Naive thymus-derived CD4-positive, alpha-beta T cell (primary cell): ENCODE measurements at regions of chr18 and their contacts with region 1.

Region 1: DNA sequence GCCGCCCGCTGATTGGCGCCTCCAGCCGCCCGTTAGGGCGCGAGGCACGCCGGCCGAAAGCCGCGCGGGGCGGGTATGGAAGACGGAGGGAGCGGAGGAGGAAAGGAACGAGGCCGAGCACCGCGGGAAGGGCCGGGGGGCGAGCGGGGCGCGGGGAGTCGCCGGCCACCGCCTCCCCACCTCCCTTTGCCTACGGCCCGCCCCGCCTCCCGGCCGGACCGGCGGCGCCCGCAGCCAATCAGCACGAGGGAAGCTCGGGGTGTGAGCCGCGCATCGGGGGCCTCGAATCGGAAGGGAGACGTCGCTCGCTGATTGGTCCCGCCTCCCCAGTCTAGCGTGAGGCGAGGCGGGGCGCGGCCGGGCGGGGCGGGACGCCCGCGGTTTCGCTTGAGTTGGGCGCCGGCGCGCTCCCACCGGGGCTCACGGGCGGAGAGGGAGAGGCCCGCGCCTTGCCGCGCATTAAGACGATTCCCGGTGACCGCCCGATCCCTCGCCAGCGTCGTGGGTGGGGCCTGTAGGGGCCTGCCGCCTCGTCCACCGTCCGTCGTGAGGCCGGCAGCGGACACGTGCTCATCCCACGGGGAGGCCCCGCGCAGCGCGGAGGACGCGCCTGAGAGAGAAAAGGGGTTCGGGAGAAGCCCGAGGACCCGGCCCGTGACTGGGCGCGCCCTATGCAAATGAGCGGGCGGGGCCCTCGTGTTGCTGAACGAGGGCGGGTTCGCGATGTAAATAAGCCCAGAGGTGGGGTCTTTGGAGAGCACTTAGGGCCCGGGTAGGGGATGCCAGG is 665 bp upstream of the SMAD2 start:
- DNase-seq: peak; percentile 91 to 96 (median 94)
- ATAC-seq: peak; percentile 88
- H3K4me3 ChIP-seq: peak overlapping the region; percentile 64
- H3K4me3 Mint-ChIP-seq: peak overlapping the region; percentile 78 to 92 (median 88)
- H3K27ac ChIP-seq: peak overlapping the region; percentile 91
- H3K27ac Mint-ChIP-seq: peak overlapping the region; percentile 89 to 98 (median 94)
- H3K4me1 ChIP-seq: peaks cover 19 to 36% of the 10 kb centered on the region in 2 donors
- H3K4me1 Mint-ChIP-seq: peaks cover 39 to 46% (median 42%) of the 10 kb centered on the region in 7 donors
- H3K27me3 ChIP-seq: no peaks in the 10 kb centered on the region
- H3K27me3 Mint-ChIP-seq: peaks cover 0 to 13% (median 0%) of the 10 kb centered on the region in 5 donors

Region 2: GRCh38 chr18:46917108-46917802 is 1013.9 kb before region 1 on chr18 and contains the starts of genes KATNAL2 and PIAS2:
- CTCF ChIA-PET with region 1: no interaction called
- POLR2A ChIA-PET with region 1: no interaction called
- intact Hi-C with region 1: loop called in 1 of 2 experiments (anchors 2 kb)
- DNase-seq: peak; percentile 65 to 83 (median 70)
- ATAC-seq: peak; percentile 91
- H3K4me3 ChIP-seq: peak within 1 kb of the TSS; percentile 59
- H3K4me3 Mint-ChIP-seq: peak within 1 kb of the TSS; percentile 90 to 97 (median 93)
- H3K27ac ChIP-seq: peak within 1 kb of the TSS; percentile 75
- H3K27ac Mint-ChIP-seq: peak within 1 kb of the TSS; percentile 82 to 94 (median 87)
- H3K4me1 ChIP-seq: peaks cover 12 to 26% of the 10 kb centered on the region in 2 donors
- H3K4me1 Mint-ChIP-seq: peaks cover 36 to 56% (median 52%) of the 10 kb centered on the region in 7 donors
- H3K27me3 ChIP-seq: no peaks in the 10 kb centered on the region
- H3K27me3 Mint-ChIP-seq: peaks cover 0 to 7% (median 0%) of the 10 kb centered on the region in 5 donors
- total RNA-seq, gene KATNAL2: 1.1 to 2.8 (median 1.7) TPM
- total RNA-seq, gene PIAS2: 29.8 to 40.6 (median 36.1) TPM

Region 3: GRCh38 chr18:47226660-47227059 is 704.5 kb before region 1 on chr18:
- CTCF ChIA-PET with region 1: no interaction called
- POLR2A ChIA-PET with region 1: no interaction called
- intact Hi-C with region 1: no loop called
- DNase-seq: no peak
- ATAC-seq: no peak
- H3K4me3 ChIP-seq: no peak overlapping the region
- H3K4me3 Mint-ChIP-seq: no peak overlapping the region
- H3K27ac ChIP-seq: no peak overlapping the region
- H3K27ac Mint-ChIP-seq: no peak overlapping the region
- H3K4me1 ChIP-seq: no peaks in the 10 kb centered on the region
- H3K4me1 Mint-ChIP-seq: no peaks in the 10 kb centered on the region
- H3K27me3 ChIP-seq: no peaks in the 10 kb centered on the region
- H3K27me3 Mint-ChIP-seq: peaks cover 36 to 48% (median 40%) of the 10 kb centered on the region in 5 donors

Region 4: DNA sequence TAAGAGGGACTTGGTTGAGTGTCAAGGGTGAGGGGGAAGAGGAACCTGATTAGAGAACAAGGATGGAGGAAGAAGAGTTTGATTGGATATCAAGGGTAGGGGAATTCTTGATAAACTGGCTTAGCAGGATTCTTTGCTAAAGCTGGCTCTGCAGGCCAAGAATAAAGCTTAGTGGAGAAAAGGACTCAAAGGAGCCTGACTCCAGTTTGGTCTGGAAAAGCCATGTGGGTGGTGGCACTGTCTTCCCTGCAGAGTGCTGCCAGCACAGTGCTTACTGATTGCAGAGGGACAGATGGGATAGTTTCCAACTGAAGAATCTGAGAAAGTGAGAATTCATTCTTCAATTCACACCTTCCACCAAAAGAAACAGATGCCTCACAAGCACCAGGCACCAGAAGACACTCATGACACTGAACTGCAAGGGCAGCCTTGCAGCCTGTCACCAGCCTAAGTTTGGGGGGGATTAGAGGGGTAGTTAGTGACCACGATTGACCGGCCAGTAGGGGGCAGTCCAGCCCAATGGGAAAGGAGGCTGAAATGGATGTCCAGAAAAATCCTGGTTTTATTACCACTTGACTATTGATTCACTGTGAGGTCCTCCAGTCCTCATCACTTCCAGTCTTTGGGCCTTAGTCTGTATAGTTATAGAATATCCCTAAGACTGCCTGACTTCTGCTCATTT is 335.2 kb before region 1 on chr18:
- CTCF ChIA-PET with region 1: no interaction called
- POLR2A ChIA-PET with region 1: no interaction called
- intact Hi-C with region 1: no loop called
- DNase-seq: no peak
- ATAC-seq: no peak
- H3K4me3 ChIP-seq: no peak overlapping the region
- H3K4me3 Mint-ChIP-seq: no peak overlapping the region
- H3K27ac ChIP-seq: no peak overlapping the region
- H3K27ac Mint-ChIP-seq: no peak overlapping the region
- H3K4me1 ChIP-seq: no peaks in the 10 kb centered on the region
- H3K4me1 Mint-ChIP-seq: peaks cover 0 to 5% (median 0%) of the 10 kb centered on the region in 7 donors
- H3K27me3 ChIP-seq: no peaks in the 10 kb centered on the region
- H3K27me3 Mint-ChIP-seq: peaks cover 22 to 46% (median 35%) of the 10 kb centered on the region in 5 donors

Region 5: DNA sequence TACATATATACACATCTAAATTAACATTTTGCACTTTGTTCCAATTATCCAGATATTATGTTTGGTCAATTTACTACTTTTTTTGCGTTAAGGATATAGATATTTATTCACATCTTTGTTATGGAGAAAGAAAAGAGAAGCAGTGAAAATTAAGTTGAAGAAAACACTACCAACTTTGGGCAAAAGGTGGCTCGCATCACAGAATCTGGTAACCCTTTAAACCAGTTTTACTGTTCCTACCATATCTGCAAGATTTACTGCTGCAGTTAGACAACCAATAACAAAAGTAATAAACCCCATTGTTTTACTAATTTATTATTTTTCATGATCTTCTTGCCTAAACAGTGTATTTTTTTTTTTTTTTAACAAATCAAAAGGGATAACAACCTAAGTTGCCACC is 54.3 kb before region 1 on chr18:
- CTCF ChIA-PET with region 1: no interaction called
- POLR2A ChIA-PET with region 1: interaction called, 3 read pairs
- intact Hi-C with region 1: loop called in 1 of 2 experiments (anchors 2 kb)
- DNase-seq: peak in 2 of 9 donors; percentile 10 to 18
- ATAC-seq: no peak
- H3K4me3 ChIP-seq: no peak overlapping the region
- H3K4me3 Mint-ChIP-seq: no peak overlapping the region
- H3K27ac ChIP-seq: no peak overlapping the region
- H3K27ac Mint-ChIP-seq: peak overlapping the region in 4 of 9 donors; percentile 8 to 42 (median 15)
- H3K4me1 ChIP-seq: no peaks in the 10 kb centered on the region
- H3K4me1 Mint-ChIP-seq: peaks cover 20 to 76% (median 68%) of the 10 kb centered on the region in 7 donors
- H3K27me3 ChIP-seq: no peaks in the 10 kb centered on the region
- H3K27me3 Mint-ChIP-seq: no peaks in the 10 kb centered on the region

Region 6: DNA sequence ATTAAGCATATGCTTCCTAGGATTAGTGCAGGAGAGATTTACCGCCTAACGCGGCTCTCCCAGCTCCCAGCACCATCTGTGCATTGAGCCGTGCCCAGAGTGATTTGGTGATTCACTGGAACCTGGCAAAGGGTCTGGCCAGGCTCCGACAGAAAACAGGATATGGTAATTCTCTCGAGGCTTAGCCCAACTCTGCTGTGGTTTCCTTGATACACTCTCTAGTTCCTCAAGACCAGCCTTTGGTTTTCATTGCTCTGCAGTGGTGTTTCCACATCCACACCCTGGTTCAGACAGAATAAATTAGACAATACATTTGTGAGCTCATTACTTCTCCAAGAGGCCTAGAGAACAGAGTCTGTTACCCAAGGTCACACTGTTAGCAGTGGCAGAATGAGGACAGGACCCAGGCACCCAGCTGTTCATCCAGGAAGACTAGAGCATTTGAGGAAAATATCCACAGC is 22.4 kb after region 1 on chr18:
- CTCF ChIA-PET with region 1: no interaction called
- POLR2A ChIA-PET with region 1: no interaction called
- intact Hi-C with region 1: loop called in 1 of 2 experiments (anchors 2 kb)
- DNase-seq: peak in 5 of 9 donors; percentile 10 to 25 (median 14)
- ATAC-seq: peak; percentile 92
- H3K4me3 ChIP-seq: no peak overlapping the region
- H3K4me3 Mint-ChIP-seq: peak overlapping the region in 9 of 10 donors; percentile 7 to 77 (median 59)
- H3K27ac ChIP-seq: no peak overlapping the region
- H3K27ac Mint-ChIP-seq: peak overlapping the region; percentile 9 to 84 (median 67)
- H3K4me1 ChIP-seq: peaks cover 8 to 11% of the 10 kb centered on the region in 2 donors
- H3K4me1 Mint-ChIP-seq: peaks cover 7 to 14% (median 13%) of the 10 kb centered on the region in 7 donors
- H3K27me3 ChIP-seq: no peaks in the 10 kb centered on the region
- H3K27me3 Mint-ChIP-seq: peaks cover 0 to 29% (median 0%) of the 10 kb centered on the region in 5 donors

Region 7: DNA sequence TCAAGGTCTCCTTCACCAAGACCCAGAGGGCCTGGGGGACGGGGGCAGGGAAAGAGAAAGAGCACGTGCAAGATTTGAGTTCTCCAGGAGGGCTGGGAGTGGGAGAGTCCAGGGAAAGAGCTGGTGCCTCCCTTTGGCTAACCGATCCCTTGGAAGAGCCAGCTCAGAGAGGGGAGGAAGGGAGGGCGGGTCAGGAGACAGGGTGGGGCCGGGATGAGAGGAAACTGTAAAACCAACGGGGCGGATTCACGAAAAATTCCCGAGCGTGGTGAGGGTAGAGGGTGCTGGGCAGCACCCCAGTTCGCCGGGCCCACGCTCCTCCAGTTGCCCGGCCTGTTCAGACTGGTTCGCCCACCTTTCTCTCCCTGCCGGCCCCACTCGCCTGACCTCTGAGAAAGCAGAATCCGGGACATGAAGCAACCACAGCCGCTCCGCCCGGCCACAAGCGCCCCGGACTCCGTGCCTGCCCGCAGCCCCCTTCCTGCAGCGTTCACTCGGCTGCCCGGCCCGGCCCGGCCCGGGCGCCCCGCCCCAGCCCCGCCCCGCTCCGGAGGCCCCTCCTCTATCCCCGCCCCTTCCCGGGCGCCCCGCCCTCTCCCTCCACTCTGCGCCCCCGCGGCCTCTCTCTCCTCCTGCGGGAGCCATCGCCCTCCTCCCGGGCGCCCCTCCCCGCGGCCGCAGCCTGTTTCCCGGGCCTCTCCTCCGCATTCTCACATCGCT is 230.2 kb after region 1 on chr18:
- CTCF ChIA-PET with region 1: no interaction called
- POLR2A ChIA-PET with region 1: no interaction called
- intact Hi-C with region 1: loop called in 1 of 2 experiments (anchors 5 kb)
- DNase-seq: peak; percentile 5 to 82 (median 34)
- ATAC-seq: peak; percentile 94
- H3K4me3 ChIP-seq: peak overlapping the region; percentile 9
- H3K4me3 Mint-ChIP-seq: peak overlapping the region; percentile 32 to 75 (median 70)
- H3K27ac ChIP-seq: no peak overlapping the region
- H3K27ac Mint-ChIP-seq: peak overlapping the region in 1 of 9 donors; percentile 49
- H3K4me1 ChIP-seq: no peaks in the 10 kb centered on the region
- H3K4me1 Mint-ChIP-seq: peaks cover 2 to 15% (median 10%) of the 10 kb centered on the region in 7 donors
- H3K27me3 ChIP-seq: no peaks in the 10 kb centered on the region
- H3K27me3 Mint-ChIP-seq: peaks cover 0 to 60% (median 16%) of the 10 kb centered on the region in 5 donors

Region 8: GRCh38 chr18:48842259-48843061 is 911.3 kb after region 1 on chr18:
- CTCF ChIA-PET with region 1: no interaction called
- POLR2A ChIA-PET with region 1: no interaction called
- intact Hi-C with region 1: loop called in 1 of 2 experiments (anchors 5 kb)
- DNase-seq: peak; percentile 25 to 85 (median 71)
- ATAC-seq: peak; percentile 86
- H3K4me3 ChIP-seq: peak overlapping the region; percentile 37
- H3K4me3 Mint-ChIP-seq: peak overlapping the region; percentile 51 to 80 (median 75)
- H3K27ac ChIP-seq: peak overlapping the region; percentile 48
- H3K27ac Mint-ChIP-seq: peak overlapping the region; percentile 92 to 97 (median 93)
- H3K4me1 ChIP-seq: peaks cover 58 to 72% of the 10 kb centered on the region in 2 donors
- H3K4me1 Mint-ChIP-seq: peaks cover 55 to 90% (median 72%) of the 10 kb centered on the region in 7 donors
- H3K27me3 ChIP-seq: no peaks in the 10 kb centered on the region
- H3K27me3 Mint-ChIP-seq: no peaks in the 10 kb centered on the region

Region 9: DNA sequence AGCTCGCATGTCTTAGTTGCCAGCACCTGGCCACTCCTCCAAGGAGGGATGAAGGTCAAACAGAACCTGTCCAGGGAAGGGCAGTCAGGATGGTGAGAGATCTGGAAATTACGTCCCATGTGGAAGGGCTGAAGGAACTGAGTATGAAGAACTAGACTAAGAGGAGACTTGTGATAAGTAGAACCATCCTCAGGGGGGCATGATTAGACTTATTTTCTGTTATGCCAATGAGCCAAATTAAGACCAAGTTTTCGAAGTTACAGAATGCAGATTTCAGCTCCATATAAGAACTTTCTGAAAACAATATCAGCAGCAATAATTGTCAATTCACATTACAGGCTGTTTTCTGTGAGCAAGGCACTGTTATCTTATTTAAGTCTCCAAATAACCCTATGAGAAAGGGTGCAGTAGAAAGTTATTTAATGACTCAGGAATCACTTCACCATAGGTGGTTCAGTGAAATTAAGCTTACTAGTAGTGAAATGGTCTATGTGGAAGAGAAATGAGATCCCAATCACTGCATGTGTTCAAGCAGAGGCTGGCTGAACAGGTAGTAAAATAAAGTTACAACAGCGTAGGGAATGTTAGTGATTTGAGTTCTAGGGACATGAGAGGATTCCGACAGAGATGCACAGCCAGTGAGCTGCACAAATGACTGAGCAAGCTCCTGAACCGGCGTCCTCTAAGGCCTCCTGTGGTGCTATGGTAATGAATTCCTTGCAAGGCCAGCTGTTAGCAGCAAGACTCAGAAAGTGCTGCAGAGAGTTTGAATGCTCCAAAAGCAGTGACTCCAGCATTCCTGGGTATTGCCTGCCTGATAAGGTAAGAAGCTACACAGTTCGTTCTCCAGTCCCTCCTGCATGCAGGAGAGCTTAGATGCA is 1533.8 kb after region 1 on chr18:
- CTCF ChIA-PET with region 1: no interaction called
- POLR2A ChIA-PET with region 1: no interaction called
- intact Hi-C with region 1: no loop called
- DNase-seq: no peak
- ATAC-seq: no peak
- H3K4me3 ChIP-seq: no peak overlapping the region
- H3K4me3 Mint-ChIP-seq: no peak overlapping the region
- H3K27ac ChIP-seq: no peak overlapping the region
- H3K27ac Mint-ChIP-seq: no peak overlapping the region
- H3K4me1 ChIP-seq: peaks cover 5 to 8% of the 10 kb centered on the region in 2 donors
- H3K4me1 Mint-ChIP-seq: peaks cover 2 to 12% (median 10%) of the 10 kb centered on the region in 7 donors
- H3K27me3 ChIP-seq: no peaks in the 10 kb centered on the region
- H3K27me3 Mint-ChIP-seq: peaks cover 0 to 15% (median 2%) of the 10 kb centered on the region in 5 donors